ENCODE measurements at regions of chr3 and their contacts with region 1.

Region 1: GRCh38 chr3:51995346-51996163 is at the start of gene RPL29:
- DNase-seq: peak; percentile 90

Region 2: GRCh38 chr3:51941798-51942602 is 53.6 kb before region 1 on chr3 and contains the starts of genes PARP3 and RRP9:
- CTCF ChIA-PET with region 1: interaction called, 5 read pairs
- POLR2A ChIA-PET with region 1: interaction called, 14 read pairs
- DNase-seq: peak; percentile 99

Region 3: GRCh38 chr3:51974963-51975851 is 20.3 kb before region 1 on chr3 and contains the start of gene ABHD14A:
- CTCF ChIA-PET with region 1: interaction called, 5 read pairs
- POLR2A ChIA-PET with region 1: interaction called, 17 read pairs
- DNase-seq: peak; percentile 82

Region 4: GRCh38 chr3:51982782-51983577 is 12.6 kb before region 1 on chr3 and contains the start of gene ACY1:
- CTCF ChIA-PET with region 1: no interaction called
- POLR2A ChIA-PET with region 1: interaction called, 88 read pairs
- DNase-seq: peak; percentile 72

Region 5: GRCh38 chr3:52056968-52057805 is 61.6 kb after region 1 on chr3:
- CTCF ChIA-PET with region 1: no interaction called
- POLR2A ChIA-PET with region 1: interaction called, 11 read pairs
- DNase-seq: peak; percentile 97

Region 6: GRCh38 chr3:52088445-52089367 is 93.2 kb after region 1 on chr3:
- CTCF ChIA-PET with region 1: no interaction called
- POLR2A ChIA-PET with region 1: no interaction called
- DNase-seq: no peak

Region 7: DNA sequence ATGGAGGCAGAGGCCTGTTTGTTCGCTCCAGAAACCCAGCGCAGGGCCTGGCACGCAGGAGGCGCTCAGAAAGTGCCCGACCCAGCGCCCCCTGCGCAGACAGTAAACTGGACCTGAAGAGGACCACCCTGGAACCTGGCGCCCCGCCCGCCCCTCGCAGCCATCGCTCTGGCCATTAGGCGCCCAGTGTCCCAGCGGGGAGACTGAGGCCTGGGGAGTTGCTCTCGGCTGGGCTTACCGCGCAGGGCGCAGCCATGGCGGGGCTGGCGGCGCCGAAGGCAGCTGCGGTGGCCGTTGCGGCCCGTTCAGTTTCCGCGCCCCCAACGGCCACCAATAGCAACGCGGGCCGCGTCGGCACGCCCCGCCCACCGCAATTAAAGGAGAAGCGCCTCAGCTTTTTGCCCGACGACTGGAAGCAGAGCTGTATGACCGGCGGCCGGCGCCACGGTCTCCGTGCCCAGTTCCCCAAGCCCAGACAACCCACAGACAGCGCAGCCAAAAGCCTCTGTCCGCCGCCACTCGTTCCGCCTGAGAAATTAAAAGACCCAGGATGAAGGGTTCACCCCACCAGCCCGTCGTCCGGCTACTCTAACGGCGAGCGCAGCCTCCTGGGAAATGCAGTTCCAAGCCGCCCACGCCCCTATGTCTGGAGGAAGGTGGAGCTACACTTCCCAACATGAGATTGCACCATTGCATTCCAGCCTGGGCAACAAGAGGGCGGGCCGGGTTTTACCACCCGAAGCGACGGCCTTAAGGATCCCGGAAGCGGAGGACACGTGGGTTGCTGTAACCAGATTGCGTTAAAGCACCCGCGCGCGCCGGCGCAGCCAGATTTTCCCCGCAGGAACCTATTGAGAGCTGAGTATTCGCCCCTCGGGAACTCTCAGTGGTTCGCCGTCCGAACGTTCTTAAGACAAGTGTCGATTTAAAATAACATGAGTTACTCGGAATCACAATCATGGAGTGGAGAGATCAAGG is 158.9 kb after region 1 on chr3 and contains the start of gene POC1A:
- CTCF ChIA-PET with region 1: no interaction called
- POLR2A ChIA-PET with region 1: interaction called, 17 read pairs
- DNase-seq: peak; percentile 90

Region 8: GRCh38 chr3:52204337-52205073 is 208.9 kb after region 1 on chr3:
- CTCF ChIA-PET with region 1: no interaction called
- POLR2A ChIA-PET with region 1: no interaction called
- DNase-seq: no peak

Region 9: GRCh38 chr3:52313774-52314188 is 318.2 kb after region 1 on chr3:
- CTCF ChIA-PET with region 1: no interaction called
- POLR2A ChIA-PET with region 1: no interaction called
- DNase-seq: no peak